BJ (cell line): ENCODE measurements at regions of chr15 and their contacts with region 1.

Region 1: DNA sequence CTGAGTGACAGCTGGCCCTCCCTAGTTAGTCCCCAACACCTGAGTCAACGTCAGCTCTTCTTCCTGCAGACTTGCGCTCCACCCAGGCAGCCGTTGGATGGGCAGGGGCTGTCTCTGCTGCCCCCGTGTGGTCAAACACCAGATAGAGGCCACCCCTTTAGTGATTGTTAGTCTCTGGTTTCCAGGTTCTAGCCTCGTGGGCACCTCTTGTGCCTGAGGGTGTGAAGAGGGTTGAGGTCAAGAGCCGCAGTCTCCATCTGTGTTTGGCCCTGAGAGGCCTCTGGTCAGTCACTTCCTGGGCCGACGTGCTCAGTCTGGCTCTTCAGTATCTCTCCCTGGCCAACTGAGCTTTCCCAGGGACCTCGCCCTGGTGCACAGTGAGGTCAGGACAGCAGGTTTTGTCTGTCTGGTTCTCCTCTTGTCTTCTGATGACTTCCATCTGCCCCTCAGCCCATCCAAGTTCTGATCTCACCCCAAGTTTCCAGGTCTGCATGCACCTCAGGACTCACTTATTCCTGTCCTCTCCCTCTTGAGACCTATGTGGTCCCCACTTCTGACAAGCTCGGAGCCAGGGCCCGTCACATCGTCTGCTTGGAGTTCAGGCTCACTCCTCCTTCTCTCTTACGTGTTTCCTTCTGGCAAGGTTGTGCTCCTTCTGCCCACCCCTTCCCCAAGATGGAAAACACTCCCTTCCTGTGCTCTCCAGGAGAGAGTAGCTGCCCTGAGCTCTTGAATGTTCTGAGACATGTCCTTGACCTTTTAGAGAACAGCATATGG is 20.9 kb downstream of the CD276 start:
- DNase-seq: no peak
- H3K4me3 ChIP-seq: no peak overlapping the region
- H3K27me3 ChIP-seq: no peaks in the 10 kb centered on the region
- CTCF ChIP-seq: peak; percentile 90

Region 2: DNA sequence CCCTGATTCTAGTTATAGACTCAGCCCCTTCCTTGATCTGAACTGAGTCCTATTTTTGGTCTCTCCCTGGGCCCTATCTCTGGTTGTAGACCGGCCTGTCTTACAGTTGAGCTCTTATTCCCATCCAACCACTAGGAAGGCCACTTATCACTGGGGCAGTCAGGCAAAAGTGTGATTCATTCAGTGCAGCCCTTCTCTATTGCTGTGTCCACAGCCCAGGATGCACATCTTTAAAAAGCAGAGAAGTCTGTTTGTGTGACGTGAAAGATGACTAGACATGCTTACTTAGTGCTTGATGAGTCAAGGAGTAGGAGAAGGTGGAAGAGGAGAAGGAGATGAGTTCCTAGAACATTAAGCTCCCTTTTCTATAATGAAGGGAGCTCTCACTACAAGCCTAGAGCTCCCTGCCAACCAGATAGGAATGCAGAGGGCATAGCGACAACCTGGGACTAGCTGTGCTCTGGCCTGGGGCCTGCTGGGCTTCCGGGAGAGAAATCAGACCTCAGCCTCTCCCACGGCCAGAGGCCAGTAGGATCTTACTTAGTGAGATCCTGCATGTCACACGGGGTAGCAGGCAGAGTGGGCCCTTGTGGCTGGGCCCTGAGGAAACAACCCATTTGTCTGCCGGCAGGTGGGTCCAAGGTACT is 22.4 kb after region 1 on chr15:
- CTCF ChIA-PET with region 1: interaction called, 18 read pairs
- POLR2A ChIA-PET with region 1: no interaction called
- DNase-seq: no peak
- H3K4me3 ChIP-seq: no peak overlapping the region
- H3K27me3 ChIP-seq: no peaks in the 10 kb centered on the region
- CTCF ChIP-seq: no peak

Region 3: GRCh38 chr15:74134387-74135027 is 429.4 kb after region 1 on chr15:
- CTCF ChIA-PET with region 1: no interaction called
- POLR2A ChIA-PET with region 1: no interaction called
- DNase-seq: no peak
- H3K4me3 ChIP-seq: no peak overlapping the region
- H3K27me3 ChIP-seq: peaks cover 47% of the 10 kb centered on the region
- CTCF ChIP-seq: peak; percentile 60